Mammary epithelial cell (primary cell): ENCODE measurements at regions of chr9 and their contacts with region 1.

Region 1: DNA sequence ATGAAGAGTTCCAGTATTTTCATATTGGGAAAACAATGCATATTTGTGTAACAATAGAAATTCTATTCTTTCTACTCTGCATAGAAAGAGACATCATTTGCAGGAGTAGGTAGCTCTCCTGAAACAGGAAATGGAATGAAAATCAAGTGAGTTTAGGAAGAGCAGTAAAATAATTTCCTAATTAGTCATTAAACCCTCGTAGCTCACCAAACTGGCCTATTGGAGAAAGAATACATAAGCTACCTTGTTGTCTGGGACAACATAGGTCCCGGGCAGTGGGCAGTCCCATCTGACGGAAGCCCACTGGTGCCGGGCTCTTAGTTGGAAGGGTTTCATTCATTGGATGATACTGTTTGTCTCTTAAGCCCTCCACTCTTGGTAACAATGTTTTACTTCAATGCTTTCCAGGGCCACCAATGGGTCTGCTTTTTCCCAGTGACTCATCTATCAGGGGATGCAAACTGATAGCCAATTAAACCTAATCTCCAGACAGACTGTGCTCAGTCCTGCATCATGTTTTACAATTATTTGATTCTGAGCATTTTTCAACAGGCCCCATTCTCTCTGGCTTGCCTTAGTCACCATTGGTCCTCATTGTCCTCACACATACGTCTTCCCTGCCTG is 46.5 kb downstream of the GNA14 start:
- DNase-seq: no peak
- H3K4me3 ChIP-seq: no peak overlapping the region
- H3K27ac ChIP-seq: no peak overlapping the region
- H3K4me1 ChIP-seq: no peaks in the 10 kb centered on the region
- H3K27me3 ChIP-seq: no peaks in the 10 kb centered on the region
- CTCF ChIP-seq: no peak

Region 2: DNA sequence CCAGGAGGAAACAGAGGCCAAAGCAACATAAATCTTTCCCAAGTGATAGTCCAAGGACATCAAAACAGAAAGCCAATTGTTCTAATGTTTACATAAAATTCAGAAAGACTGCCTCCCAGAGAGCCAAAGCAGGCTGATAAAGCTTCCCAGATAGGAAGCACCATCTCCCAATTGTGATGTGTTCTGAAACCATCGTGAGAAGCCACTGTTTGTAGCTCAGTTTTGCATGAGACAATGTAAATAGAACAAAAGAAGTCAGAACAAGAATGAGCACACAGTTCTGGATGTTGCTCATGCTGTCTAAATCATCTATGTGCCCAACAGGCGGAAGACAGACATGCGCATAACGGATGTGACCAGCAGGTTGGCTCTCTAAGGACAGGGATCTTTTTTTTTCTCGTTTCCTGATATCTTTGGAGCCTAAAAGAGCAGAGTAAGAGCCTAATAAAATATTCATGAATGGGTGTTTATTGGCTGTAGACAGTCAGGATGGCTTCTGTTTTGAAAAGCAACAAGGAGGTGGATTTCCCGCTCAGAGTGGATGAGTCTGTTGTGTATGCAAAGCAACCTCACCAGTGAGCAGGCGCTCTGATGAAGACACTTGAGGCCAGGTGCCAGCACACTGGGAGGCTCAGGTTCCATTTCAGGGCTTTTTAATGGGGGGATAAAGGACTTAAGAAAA is 67.1 kb before region 1 on chr9:
- CTCF ChIA-PET with region 1: no interaction called
- dilution Hi-C with region 1: loop called (anchors 5 kb)
- in situ Hi-C with region 1: no loop called
- intact Hi-C with region 1: no loop called
- DNase-seq: no peak
- H3K4me3 ChIP-seq: no peak overlapping the region
- H3K27ac ChIP-seq: no peak overlapping the region
- H3K4me1 ChIP-seq: no peaks in the 10 kb centered on the region
- H3K27me3 ChIP-seq: no peaks in the 10 kb centered on the region
- CTCF ChIP-seq: no peak